Mammary epithelial cell (primary cell): ENCODE measurements at regions of chr10 and their contacts with region 1.

Region 1: GRCh38 chr10:118423800-118424479 is 81.8 kb upstream of the FAM204A start:
- DNase-seq: peak; percentile 79
- H3K4me3 ChIP-seq: no peak overlapping the region
- H3K27ac ChIP-seq: no peak overlapping the region
- H3K4me1 ChIP-seq: no peaks in the 10 kb centered on the region
- H3K27me3 ChIP-seq: peaks cover 2% of the 10 kb centered on the region
- CTCF ChIP-seq: peak; percentile 75 to 89

Region 2: GRCh38 chr10:118341791-118342637 is 81.9 kb before region 1 on chr10 and contains the start of gene FAM204A:
- CTCF ChIA-PET with region 1: no interaction called
- dilution Hi-C with region 1: no loop called
- in situ Hi-C with region 1: no loop called
- intact Hi-C with region 1: loop called (anchors 1 kb)
- DNase-seq: peak; percentile 91
- H3K4me3 ChIP-seq: peak within 1 kb of the TSS; percentile 62 to 87 (median 83)
- H3K27ac ChIP-seq: peak within 1 kb of the TSS; percentile 75
- H3K4me1 ChIP-seq: peaks cover 10% of the 10 kb centered on the region
- H3K27me3 ChIP-seq: no peaks in the 10 kb centered on the region
- CTCF ChIP-seq: no peak
- total RNA-seq, gene FAM204A: 50.3 to 73.2 TPM

Region 3: DNA sequence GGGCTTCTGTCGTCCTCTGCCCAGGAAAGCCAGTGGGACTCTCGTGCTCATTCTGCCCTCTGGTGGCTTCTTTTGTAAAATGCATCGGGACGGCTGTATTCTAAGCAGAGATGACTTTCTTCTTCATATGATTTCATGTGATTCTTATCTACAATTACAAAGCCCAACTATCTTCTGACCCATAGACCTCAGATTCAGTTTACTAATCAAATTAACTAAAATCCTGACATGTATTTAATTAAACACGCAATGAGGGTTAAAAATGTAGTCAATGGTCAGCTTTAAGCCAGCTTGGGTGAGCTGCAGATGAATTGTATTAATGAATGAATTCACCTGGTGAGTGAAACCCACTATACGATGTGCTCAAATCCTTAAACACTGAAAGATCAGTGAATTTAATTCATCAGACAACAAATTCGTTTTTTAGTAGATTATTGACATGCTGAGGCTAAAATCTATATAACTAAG is 35.8 kb after region 1 on chr10:
- CTCF ChIA-PET with region 1: no interaction called
- dilution Hi-C with region 1: no loop called
- in situ Hi-C with region 1: no loop called
- intact Hi-C with region 1: no loop called
- DNase-seq: peak; percentile 52
- H3K4me3 ChIP-seq: no peak overlapping the region
- H3K27ac ChIP-seq: no peak overlapping the region
- H3K4me1 ChIP-seq: no peaks in the 10 kb centered on the region
- H3K27me3 ChIP-seq: no peaks in the 10 kb centered on the region
- CTCF ChIP-seq: peak; percentile 67 to 84